Adrenal gland (tissue), 19 donors: ENCODE measurements at regions of chr3 and their contacts with region 1.

Region 1: GRCh38 chr3:61561374-61562041 is at the start of gene PTPRG:
- DNase-seq: peak; percentile 90 to 95 (median 92)
- H3K4me3 ChIP-seq: peak within 1 kb of the TSS; percentile 42 to 93 (median 74)
- H3K27ac ChIP-seq: peak within 1 kb of the TSS; percentile 89 to 97 (median 94)
- H3K4me1 ChIP-seq: peaks cover 0 to 20% of the 10 kb centered on the region in 2 donors
- H3K27me3 ChIP-seq: no peaks in the 10 kb centered on the region
- CTCF ChIP-seq: no peak
- POLR2A ChIP-seq: peak; percentile 59 to 93
- total RNA-seq, gene PTPRG: 16.5 to 119 (median 76.7) TPM

Region 2: DNA sequence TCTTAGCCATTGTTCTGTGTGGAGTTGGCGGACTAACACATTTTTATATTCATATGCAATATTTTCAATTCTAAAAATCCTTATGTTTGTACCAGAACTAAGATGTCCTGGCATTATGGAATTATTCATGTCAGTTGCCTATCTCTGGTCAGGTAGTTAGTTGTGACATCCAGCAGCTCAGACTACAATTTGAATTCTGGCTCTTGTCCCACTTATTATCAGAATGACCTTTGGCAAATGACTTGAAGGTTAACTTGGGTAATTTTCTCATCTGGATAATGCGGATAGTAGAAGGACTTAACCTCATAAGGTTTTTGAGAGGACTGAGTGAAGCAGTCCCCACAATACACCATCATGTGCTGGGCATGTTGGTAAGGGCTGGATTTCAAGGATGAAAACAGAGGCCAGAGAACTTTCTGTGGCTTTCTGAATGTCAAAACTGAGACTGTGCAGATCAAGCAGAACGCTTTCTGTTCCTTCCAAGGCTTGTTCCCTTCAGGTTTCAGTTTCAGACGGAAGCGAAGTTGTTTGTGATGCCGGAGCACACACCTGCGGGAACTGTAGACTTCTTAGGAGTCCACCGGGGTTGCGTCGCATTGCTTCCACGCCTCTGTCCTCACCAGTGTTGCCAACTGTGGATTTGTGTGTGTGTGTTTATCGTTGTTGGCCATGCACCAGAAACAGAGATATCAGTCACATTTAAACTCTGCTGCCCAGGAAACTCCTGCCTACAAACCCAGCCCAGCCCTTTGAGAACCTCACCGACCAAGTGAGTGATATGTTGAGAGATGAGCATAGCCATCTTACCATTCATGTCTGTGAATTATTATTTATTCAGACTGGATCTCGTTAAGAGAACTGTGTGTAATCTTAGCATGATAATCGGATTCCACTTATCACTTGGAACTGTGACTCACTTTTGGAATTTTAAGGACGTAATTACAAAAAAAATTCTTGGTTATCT is 75.9 kb after region 1 on chr3:
- intact Hi-C with region 1: loop called in 1 of 2 experiments (anchors 10 kb)
- DNase-seq: peak; percentile 38 to 75 (median 60)
- H3K4me3 ChIP-seq: peak overlapping the region in 2 of 4 donors; percentile 27 to 44
- H3K27ac ChIP-seq: peak overlapping the region; percentile 0 to 86 (median 73)
- H3K4me1 ChIP-seq: peaks cover 16 to 31% of the 10 kb centered on the region in 2 donors
- H3K27me3 ChIP-seq: no peaks in the 10 kb centered on the region
- CTCF ChIP-seq: no peak
- POLR2A ChIP-seq: peak in 1 of 2 donors; percentile 26

Region 3: DNA sequence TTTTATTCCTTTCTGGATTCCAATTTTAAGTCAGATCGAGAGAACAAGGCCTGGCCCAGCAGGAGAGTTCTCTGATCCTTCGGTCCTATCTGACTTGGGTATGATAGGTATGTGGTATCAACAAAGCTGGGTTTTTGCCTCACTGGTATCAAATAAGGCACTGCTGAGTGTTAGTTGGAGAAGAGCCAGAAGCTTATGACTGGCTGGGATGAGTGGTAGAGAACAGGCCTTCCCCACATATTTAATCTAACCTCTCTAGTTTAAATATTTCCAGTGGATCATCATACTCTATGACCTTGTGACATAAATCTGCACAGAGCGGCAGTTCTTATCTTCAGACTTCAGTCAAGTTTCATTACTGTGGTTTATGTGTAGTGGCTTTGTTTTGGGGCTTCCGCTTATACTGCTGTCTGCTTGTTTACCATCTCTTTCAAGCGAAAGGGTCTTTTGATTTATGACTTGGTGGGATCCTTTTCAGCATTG is 164.4 kb after region 1 on chr3:
- intact Hi-C with region 1: loop called in 1 of 2 experiments (anchors 10 kb)
- DNase-seq: peak; percentile 25 to 64 (median 53)
- H3K4me3 ChIP-seq: no peak overlapping the region
- H3K27ac ChIP-seq: peak overlapping the region; percentile 44 to 72 (median 61)
- H3K4me1 ChIP-seq: peaks cover 16 to 18% of the 10 kb centered on the region in 2 donors
- H3K27me3 ChIP-seq: no peaks in the 10 kb centered on the region
- CTCF ChIP-seq: no peak
- POLR2A ChIP-seq: no peak

Region 4: DNA sequence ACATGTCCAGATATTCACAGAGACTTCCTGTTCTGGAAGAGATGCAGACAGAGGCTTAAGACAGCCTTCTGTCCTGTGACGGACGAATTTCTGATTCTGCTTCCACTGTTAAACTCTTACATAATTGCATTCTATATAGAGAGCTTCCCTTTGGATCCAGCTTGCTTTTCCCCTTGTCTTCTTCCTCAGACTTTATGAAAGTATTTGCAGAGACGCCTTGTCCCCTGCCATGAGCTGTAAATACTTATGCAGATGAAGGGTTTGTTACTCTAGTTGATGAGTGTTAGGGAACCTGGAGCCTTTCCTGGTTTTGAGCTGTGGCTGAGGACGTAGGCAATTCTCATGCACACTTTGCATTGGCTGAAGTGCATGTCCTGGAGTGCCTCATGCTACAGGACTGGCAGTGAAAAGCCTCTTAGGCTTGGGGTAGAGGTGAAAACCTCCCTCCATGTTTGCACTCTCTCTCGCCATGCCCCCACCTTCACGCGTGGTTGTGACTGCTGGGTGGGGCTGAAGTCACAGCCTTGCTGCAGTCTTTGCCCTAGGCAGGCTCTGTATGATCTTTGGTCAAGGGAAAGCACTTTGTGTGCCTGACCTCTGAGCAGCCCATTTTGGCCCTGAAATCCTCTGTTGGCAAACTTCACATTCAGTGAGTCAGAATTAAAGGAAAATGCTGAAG is 286.4 kb after region 1 on chr3:
- intact Hi-C with region 1: loop called (anchors 5 to 10 kb)
- DNase-seq: peak; percentile 46 to 79 (median 70)
- H3K4me3 ChIP-seq: peak overlapping the region in 1 of 4 donors; percentile 7
- H3K27ac ChIP-seq: peak overlapping the region in 4 of 5 donors; percentile 57 to 85 (median 69)
- H3K4me1 ChIP-seq: peaks cover 22 to 23% of the 10 kb centered on the region in 2 donors
- H3K27me3 ChIP-seq: no peaks in the 10 kb centered on the region
- CTCF ChIP-seq: no peak
- POLR2A ChIP-seq: no peak

Region 5: GRCh38 chr3:62188681-62189383 is 627.3 kb after region 1 on chr3:
- intact Hi-C with region 1: loop called (anchors 5 to 10 kb)
- DNase-seq: peak; percentile 49 to 92 (median 80)
- H3K4me3 ChIP-seq: peak overlapping the region in 1 of 4 donors; percentile 28
- H3K27ac ChIP-seq: no peak overlapping the region
- H3K4me1 ChIP-seq: peaks cover 6 to 7% of the 10 kb centered on the region in 2 donors
- H3K27me3 ChIP-seq: no peaks in the 10 kb centered on the region
- CTCF ChIP-seq: peak; percentile 73 to 85 (median 81)
- POLR2A ChIP-seq: no peak